ENCODE measurements at regions of chr1 and their contacts with region 1.

Region 1: GRCh38 chr1:116485071-116485735 is 85.6 kb downstream of the CD58 start:
- DNase-seq: peak; percentile 90
- ATAC-seq: peak; percentile 93
- H3K4me3 Mint-ChIP-seq: no peak overlapping the region
- H3K27ac Mint-ChIP-seq: no peak overlapping the region
- H3K4me1 Mint-ChIP-seq: peaks cover 9% of the 10 kb centered on the region
- H3K27me3 Mint-ChIP-seq: no peaks in the 10 kb centered on the region

Region 2: GRCh38 chr1:116139592-116140134 is 345.5 kb before region 1 on chr1:
- CTCF ChIA-PET with region 1: interaction called, 243 read pairs
- DNase-seq: no peak
- ATAC-seq: no peak
- H3K4me3 Mint-ChIP-seq: no peak overlapping the region
- H3K27ac Mint-ChIP-seq: no peak overlapping the region
- H3K4me1 Mint-ChIP-seq: peaks cover 8% of the 10 kb centered on the region
- H3K27me3 Mint-ChIP-seq: peaks cover 13% of the 10 kb centered on the region

Region 3: DNA sequence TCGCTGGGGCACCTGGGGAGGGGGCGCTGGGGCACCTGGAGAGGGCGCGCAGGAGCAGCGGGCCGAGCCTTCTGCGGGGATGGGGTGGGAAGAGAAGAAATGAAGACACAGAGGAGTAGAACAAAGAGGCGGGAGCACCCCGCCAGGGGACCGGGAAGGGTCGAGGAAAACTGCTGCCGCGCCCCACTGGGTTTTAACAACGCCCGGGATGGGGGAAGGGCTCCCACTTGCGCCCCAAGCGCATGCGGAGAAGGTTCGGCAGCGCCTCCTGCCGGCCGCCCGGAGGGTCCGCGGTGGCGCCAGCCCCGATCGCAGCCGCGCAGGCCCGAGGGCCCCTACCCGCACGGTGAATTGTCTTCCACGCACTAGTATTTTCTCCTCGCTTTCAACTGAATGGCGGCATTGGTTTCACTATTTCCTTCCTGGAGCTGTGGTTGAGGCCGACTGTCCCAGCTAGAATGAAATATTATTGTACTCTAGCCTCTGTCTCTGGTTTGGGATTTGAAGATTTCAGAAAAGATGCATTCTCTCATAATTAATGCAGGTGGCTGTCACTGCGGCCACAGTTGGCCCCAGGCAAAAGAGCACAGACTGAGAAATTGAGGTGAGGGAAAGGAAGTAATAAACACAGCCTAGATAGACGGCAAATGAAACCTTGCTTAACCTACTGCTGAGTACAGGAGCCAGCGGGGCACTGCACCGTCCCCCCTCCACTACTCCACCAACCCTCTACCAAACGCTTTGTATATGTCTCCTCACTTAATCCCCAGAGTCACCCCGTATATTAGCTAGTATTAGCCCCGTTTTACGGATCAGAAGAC is 316.7 kb before region 1 on chr1:
- CTCF ChIA-PET with region 1: interaction called, 14 read pairs
- DNase-seq: peak; percentile 83
- ATAC-seq: peak; percentile 98
- H3K4me3 Mint-ChIP-seq: peak overlapping the region; percentile 61
- H3K27ac Mint-ChIP-seq: peak overlapping the region; percentile 39
- H3K4me1 Mint-ChIP-seq: peaks cover 6% of the 10 kb centered on the region
- H3K27me3 Mint-ChIP-seq: no peaks in the 10 kb centered on the region

Region 4: DNA sequence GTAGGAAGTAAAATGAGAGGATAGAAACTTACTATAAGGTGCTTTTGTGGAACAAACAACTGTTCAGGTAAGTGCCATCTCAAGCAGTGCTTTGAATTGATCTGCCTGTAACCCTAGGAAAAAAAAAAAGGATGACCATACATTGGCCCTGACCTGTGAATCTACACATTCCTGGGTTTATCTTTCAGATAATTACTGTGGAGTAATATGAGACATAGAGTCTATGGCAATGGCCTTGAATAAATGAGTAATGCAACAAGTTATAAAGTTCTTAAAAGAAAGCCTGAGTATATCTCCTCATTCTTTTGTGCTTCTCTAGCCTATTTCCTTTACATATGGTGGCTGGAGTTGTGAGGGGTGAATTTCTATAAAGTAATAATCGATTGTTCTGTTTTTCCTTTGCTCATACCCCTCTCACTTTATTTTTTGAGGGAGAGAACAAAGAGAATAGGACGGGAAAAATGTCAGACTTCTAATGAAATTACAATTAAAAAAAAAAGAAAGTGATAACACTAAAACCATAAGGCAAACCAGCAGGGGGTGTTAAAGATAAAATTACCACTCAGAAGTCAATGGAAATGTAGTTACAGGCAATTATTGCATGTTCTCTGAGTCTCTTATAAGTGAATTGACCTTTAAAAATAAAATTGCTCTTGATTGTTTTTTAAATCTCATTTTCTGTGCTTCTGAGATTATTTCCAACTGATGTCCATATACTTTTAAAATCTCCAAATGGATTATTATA is 124.6 kb before region 1 on chr1:
- CTCF ChIA-PET with region 1: interaction called, 39 read pairs
- DNase-seq: no peak
- ATAC-seq: no peak
- H3K4me3 Mint-ChIP-seq: no peak overlapping the region
- H3K27ac Mint-ChIP-seq: no peak overlapping the region
- H3K4me1 Mint-ChIP-seq: peaks cover 5% of the 10 kb centered on the region
- H3K27me3 Mint-ChIP-seq: peaks cover 3% of the 10 kb centered on the region

Region 5: DNA sequence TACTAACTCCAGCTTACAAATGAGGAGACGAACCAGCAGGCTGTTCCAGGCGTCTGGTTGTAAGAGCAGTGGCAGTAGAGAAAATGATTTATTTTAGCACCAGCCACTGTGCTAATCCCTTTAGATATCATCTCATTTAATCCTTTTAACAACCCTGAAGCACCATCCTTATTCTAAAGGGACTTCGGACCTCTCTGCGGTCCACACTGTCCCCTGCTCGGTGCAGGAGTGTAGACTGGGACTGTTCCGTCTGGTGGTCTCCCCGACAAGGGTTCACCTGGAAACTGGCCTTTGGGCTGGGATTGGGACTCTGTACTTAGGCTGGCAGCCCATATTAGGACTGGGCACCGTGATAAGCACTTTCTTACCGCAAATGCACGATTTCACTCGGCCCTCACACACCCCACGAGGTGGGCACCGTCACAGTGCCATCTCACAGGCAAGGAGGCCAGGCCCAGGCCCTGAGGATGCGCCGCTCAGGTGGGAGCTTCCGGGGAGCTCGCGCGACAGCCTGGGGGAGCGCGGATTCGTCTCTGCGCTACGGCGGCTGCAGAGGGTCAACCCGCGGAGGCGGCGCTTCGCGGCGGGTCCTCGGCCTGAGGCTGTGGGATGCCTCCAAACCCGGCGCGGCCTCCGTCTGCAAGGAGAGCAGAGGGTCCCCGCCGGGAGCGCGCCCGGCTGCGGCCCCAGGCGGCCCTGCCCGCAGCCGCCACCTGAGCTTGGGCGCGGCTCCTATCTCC is 66.9 kb before region 1 on chr1:
- CTCF ChIA-PET with region 1: interaction called, 15 read pairs
- DNase-seq: peak; percentile 91
- ATAC-seq: peak; percentile 96
- H3K4me3 Mint-ChIP-seq: peak overlapping the region; percentile 91
- H3K27ac Mint-ChIP-seq: peak overlapping the region; percentile 90
- H3K4me1 Mint-ChIP-seq: peaks cover 57% of the 10 kb centered on the region
- H3K27me3 Mint-ChIP-seq: no peaks in the 10 kb centered on the region

Region 6: DNA sequence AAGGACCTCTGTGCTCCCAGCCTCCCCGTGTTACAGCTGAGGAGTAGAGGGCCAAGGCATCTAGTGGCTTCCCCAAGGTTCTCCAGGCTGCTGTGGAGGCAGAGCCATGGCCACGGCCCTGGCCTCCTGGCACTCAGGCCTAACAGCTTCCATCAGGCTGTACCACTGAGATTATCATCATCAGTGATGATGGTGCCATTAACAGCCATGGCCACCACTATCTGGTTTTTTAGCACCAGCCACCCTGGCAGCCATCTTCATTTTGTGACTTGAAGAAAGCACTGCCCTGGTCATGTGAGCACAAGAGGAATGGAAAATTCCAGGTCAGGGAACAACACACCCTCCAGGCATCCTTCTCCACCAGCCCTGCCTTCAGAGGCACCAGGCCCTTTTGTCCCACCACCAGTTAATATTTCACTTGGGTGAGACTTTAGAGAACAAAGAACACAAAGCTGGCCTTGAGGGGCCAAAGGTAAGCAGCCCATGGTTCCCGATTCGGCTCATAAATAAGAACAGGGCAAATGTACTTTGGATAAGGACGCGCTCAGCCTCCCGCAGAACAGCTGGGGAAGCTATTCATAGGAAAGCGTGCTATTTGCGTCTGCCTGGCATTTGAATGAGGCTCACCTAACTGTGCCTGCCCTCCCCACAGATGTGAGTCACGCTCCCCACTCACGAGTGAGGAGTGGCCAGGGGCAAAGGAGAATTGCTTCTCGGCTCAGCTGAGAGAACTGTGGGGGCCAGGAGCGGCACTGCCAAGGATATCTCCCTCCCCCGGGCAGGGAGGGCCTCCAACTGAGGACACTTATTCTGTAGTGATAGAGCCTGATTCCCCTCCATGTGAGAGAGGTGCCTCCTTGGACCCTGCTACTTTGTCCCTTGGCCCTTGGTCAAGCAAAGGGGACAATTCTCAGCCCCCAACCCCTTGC is 10.0 kb before region 1 on chr1:
- CTCF ChIA-PET with region 1: interaction called, 19 read pairs
- DNase-seq: no peak
- ATAC-seq: no peak
- H3K4me3 Mint-ChIP-seq: no peak overlapping the region
- H3K27ac Mint-ChIP-seq: no peak overlapping the region
- H3K4me1 Mint-ChIP-seq: peaks cover 4% of the 10 kb centered on the region
- H3K27me3 Mint-ChIP-seq: no peaks in the 10 kb centered on the region

Region 7: DNA sequence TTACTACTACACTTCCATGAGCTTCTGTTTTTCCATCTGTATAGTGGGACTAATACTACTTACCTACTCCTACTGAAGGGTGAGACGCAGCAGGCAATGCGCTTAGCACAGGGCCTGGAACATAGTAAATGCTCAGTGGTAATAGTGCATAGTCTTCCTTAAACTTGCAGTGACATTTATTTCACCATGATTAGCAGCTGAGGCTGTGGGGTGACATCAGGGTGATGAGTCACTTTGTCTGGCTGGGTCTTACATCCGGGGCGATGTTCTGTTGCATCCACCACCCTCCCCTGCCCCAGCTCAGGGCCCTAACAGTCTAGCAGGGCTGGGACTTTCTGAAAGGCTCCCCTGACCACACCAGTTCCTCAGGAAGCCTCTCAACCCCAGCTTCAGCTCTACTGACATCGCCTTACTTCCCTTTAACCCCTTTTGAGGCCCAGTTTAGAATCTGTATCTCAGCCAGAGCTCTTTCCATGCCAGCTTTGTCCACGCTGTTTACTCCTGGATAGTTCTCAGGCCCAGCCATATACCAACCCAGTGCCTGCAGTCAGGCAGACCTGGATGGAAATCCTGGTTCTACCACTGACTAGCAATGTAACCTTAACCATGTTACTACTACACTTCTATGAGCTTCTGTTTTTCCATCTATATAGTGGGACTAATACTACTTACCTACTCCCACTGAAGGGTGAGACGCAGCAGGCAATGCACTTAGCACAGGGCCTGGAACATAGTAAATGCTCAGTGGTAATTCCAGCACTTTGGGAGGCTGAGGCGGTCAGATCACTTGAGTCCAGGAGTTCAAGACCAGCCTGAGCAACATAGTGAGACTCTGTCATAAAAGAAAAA is 19.3 kb after region 1 on chr1:
- CTCF ChIA-PET with region 1: interaction called, 69 read pairs
- DNase-seq: peak; percentile 96
- ATAC-seq: peak; percentile 94
- H3K4me3 Mint-ChIP-seq: peak overlapping the region; percentile 18
- H3K27ac Mint-ChIP-seq: peak overlapping the region; percentile 92
- H3K4me1 Mint-ChIP-seq: peaks cover 76% of the 10 kb centered on the region
- H3K27me3 Mint-ChIP-seq: no peaks in the 10 kb centered on the region

Region 8: GRCh38 chr1:116847688-116848531 is 362.7 kb after region 1 on chr1:
- CTCF ChIA-PET with region 1: no interaction called
- DNase-seq: peak; percentile 45
- ATAC-seq: peak; percentile 97
- H3K4me3 Mint-ChIP-seq: no peak overlapping the region
- H3K27ac Mint-ChIP-seq: no peak overlapping the region
- H3K4me1 Mint-ChIP-seq: peaks cover 19% of the 10 kb centered on the region
- H3K27me3 Mint-ChIP-seq: no peaks in the 10 kb centered on the region